ENCODE measurements at regions of chr2 and their contacts with region 1.

Region 1: DNA sequence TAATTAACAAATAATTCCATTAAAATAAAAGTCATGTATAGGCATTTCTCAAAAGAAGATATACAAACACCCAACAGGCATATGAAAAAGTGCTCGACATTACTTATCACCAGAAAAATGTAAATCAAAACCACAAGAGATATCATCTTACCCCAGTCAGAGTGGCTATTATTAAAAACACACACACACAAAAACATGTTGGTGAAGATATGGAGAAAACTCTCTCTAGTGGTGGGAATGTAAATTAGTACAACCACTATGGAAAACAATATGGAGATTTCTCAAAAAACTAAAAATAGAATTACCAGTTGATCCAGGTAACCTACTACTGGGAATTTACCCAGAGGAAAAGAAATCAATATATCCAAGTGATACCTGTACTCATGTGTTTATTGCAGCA is 966.3 kb upstream of the POU3F3 start:
- DNase-seq: no peak
- ATAC-seq: no peak
- H3K4me3 ChIP-seq: no peak overlapping the region
- H3K27ac ChIP-seq: no peak overlapping the region
- H3K4me1 ChIP-seq: no peaks in the 10 kb centered on the region
- H3K27me3 ChIP-seq: no peaks in the 10 kb centered on the region
- CTCF ChIP-seq: no peak

Region 2: GRCh38 chr2:103734911-103735310 is 152.7 kb before region 1 on chr2:
- CTCF ChIA-PET with region 1: no interaction called
- POLR2A ChIA-PET with region 1: no interaction called
- in situ Hi-C with region 1: no loop called
- intact Hi-C with region 1: no loop called
- DNase-seq: no peak
- ATAC-seq: no peak
- H3K4me3 ChIP-seq: no peak overlapping the region
- H3K27ac ChIP-seq: no peak overlapping the region
- H3K4me1 ChIP-seq: no peaks in the 10 kb centered on the region
- H3K27me3 ChIP-seq: no peaks in the 10 kb centered on the region
- CTCF ChIP-seq: no peak

Region 3: GRCh38 chr2:104236491-104236890 is 348.9 kb after region 1 on chr2:
- CTCF ChIA-PET with region 1: no interaction called
- POLR2A ChIA-PET with region 1: no interaction called
- in situ Hi-C with region 1: no loop called
- intact Hi-C with region 1: loop called (anchors 5 kb)
- DNase-seq: no peak
- ATAC-seq: no peak
- H3K4me3 ChIP-seq: no peak overlapping the region
- H3K27ac ChIP-seq: no peak overlapping the region
- H3K4me1 ChIP-seq: no peaks in the 10 kb centered on the region
- H3K27me3 ChIP-seq: no peaks in the 10 kb centered on the region
- CTCF ChIP-seq: no peak

Measured in Panc1 (cell line).